AG04449 (cell line): ENCODE measurements at regions of chr18 and their contacts with region 1.

Region 1: GRCh38 chr18:293536-293935 is 25.7 kb upstream of the THOC1 start:
- DNase-seq: no peak
- H3K4me3 ChIP-seq: no peak overlapping the region
- CTCF ChIP-seq: no peak

Region 2: DNA sequence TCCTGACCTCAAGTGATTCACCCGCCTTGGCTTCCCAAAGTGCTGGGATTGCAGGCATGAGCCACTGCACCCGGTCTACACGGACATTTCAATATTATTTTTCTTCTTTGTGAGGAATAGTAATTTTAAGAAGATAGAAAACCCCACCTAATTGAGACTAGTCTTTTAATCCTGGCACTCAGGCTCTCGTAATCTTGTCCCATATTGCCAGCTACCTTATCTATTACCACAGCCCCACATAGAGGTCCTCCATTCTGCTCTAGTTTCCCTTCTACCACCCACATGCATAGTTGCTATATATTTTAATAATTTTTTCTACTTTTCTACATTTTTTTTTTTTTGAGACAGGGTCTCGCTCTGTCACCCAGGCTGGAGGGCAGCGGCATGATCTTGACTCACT is 144.7 kb before region 1 on chr18:
- CTCF ChIA-PET with region 1: no interaction called
- POLR2A ChIA-PET with region 1: no interaction called
- DNase-seq: no peak
- H3K4me3 ChIP-seq: no peak overlapping the region
- CTCF ChIP-seq: no peak

Region 3: DNA sequence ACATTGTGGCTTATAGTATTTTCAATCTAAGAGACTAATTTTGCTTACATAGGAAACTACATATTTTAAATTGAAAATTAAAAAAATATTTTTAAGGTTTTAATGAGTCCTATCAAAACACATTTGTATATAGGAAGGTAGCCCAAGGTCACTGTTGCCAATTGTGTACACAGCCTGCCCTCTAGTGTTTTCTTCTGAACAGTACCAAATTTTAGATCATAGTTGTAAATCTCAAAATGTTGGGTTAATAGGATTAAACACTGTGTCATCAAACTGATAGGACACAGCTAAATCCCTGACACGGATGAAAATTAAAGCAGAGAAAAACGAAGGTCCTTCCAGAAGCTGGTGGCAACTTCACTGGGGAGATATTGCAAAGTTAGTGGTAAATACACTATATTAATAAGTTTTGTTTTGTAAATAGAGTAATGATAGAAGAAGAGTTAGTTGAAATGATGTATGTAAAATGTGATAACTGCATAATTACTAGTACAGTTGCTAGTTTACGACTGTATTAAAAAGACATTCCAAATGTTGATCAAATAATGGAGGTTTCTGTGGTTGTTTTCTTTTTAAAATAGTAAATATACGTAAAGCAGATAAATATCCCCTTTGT is 323.0 kb after region 1 on chr18:
- CTCF ChIA-PET with region 1: interaction called, 242 read pairs
- POLR2A ChIA-PET with region 1: no interaction called
- DNase-seq: no peak
- H3K4me3 ChIP-seq: no peak overlapping the region
- CTCF ChIP-seq: peak; percentile 49

Region 4: GRCh38 chr18:629269-630150 is 336.0 kb after region 1 on chr18:
- CTCF ChIA-PET with region 1: interaction called, 242 read pairs
- POLR2A ChIA-PET with region 1: no interaction called
- DNase-seq: no peak
- H3K4me3 ChIP-seq: no peak overlapping the region
- CTCF ChIP-seq: no peak

Region 5: DNA sequence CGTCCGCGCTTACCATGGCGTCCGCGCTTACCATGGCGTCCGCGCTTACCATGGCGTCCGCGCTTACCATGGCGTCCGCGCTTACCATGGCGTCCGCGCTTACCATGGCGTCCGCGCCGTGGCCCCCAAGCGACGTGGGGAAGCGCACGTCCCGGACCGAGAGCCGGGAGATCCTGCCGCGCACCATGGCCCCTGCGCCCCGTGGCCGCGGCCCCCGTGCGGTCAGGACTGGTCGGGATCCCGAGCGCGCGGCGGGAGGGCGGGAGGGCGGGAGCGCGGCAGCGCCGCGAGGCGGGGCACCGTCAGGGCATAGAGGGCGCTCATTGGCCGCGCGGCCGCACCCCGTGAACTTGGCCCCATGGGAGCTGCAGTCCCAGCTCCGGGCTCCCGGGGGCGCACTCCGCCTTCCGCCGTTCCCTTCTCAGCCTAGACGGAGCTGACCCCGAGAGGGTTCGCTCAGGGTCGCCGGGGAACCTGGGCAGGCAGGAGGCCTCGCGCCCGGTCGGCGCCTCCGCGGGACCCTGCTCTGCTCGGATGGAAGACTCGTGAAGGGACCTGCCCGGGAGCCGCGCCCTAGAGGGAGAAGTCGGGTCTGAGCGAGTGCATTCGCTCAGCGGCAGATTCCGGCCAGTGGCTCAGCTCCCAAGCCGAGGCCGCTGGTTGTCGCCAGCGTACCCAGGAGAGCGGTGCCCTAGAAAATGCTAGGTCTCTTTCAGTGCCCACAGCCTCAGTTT is 419.0 kb after region 1 on chr18 and contains the start of gene ENOSF1:
- CTCF ChIA-PET with region 1: no interaction called
- POLR2A ChIA-PET with region 1: no interaction called
- DNase-seq: no peak
- H3K4me3 ChIP-seq: peak within 1 kb of the TSS; percentile 73
- CTCF ChIP-seq: peak; percentile 65